Breast epithelium (tissue), 4 donors: ENCODE measurements at regions of chr10 and their contacts with region 1.

Region 1: GRCh38 chr10:35554461-35555056 is 50.6 kb upstream of the GJD4 start:
- DNase-seq: no peak
- H3K4me3 ChIP-seq: no peak overlapping the region
- H3K27ac ChIP-seq: no peak overlapping the region
- H3K4me1 ChIP-seq: no peaks in the 10 kb centered on the region
- H3K27me3 ChIP-seq: no peaks in the 10 kb centered on the region
- CTCF ChIP-seq: no peak
- POLR2A ChIP-seq: no peak

Region 2: DNA sequence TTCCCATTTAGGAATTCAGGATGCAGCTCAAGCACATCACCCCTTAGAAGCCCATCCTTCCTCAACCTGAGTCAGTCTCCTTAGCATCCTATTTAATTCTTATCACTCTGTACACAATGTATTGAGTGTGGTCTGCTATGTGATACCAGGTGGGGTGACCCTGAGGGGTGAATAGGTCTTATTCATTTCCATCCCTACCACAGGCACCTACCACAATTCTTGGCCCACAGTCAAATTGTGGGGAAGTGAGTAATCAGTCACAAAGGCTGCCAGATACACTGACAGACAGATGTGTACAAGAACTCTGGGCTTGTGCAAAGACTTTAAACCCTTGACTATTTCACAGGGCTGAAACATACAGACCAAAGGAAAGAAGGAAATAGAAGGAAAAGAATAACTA is 1300.0 kb before region 1 on chr10:
- intact Hi-C with region 1: no loop called
- DNase-seq: no peak
- H3K4me3 ChIP-seq: no peak overlapping the region
- H3K27ac ChIP-seq: no peak overlapping the region
- H3K4me1 ChIP-seq: no peaks in the 10 kb centered on the region
- H3K27me3 ChIP-seq: no peaks in the 10 kb centered on the region
- CTCF ChIP-seq: no peak
- POLR2A ChIP-seq: no peak

Region 3: GRCh38 chr10:35565602-35566081 is 11.1 kb after region 1 on chr10:
- intact Hi-C with region 1: no loop called
- DNase-seq: no peak
- H3K4me3 ChIP-seq: no peak overlapping the region
- H3K27ac ChIP-seq: no peak overlapping the region
- H3K4me1 ChIP-seq: no peaks in the 10 kb centered on the region
- H3K27me3 ChIP-seq: no peaks in the 10 kb centered on the region
- CTCF ChIP-seq: no peak
- POLR2A ChIP-seq: no peak

Region 4: GRCh38 chr10:35690534-35690933 is 136.0 kb after region 1 on chr10:
- intact Hi-C with region 1: no loop called
- DNase-seq: no peak
- H3K4me3 ChIP-seq: no peak overlapping the region
- H3K27ac ChIP-seq: no peak overlapping the region
- H3K4me1 ChIP-seq: no peaks in the 10 kb centered on the region
- H3K27me3 ChIP-seq: no peaks in the 10 kb centered on the region
- CTCF ChIP-seq: no peak
- POLR2A ChIP-seq: no peak

Region 5: GRCh38 chr10:36542493-36542892 is 987.9 kb after region 1 on chr10:
- intact Hi-C with region 1: loop called (anchors 5 kb)
- DNase-seq: no peak
- H3K4me3 ChIP-seq: no peak overlapping the region
- H3K27ac ChIP-seq: no peak overlapping the region
- H3K4me1 ChIP-seq: no peaks in the 10 kb centered on the region
- H3K27me3 ChIP-seq: no peaks in the 10 kb centered on the region
- CTCF ChIP-seq: no peak
- POLR2A ChIP-seq: no peak